ENCODE measurements at regions of chr20 and their contacts with region 1.

Region 1: GRCh38 chr20:48440763-48441315 is 387.0 kb downstream of the PREX1 start:
- DNase-seq: no peak
- H3K4me3 ChIP-seq: no peak overlapping the region
- H3K27ac ChIP-seq: no peak overlapping the region
- H3K4me1 ChIP-seq: no peaks in the 10 kb centered on the region
- H3K27me3 ChIP-seq: no peaks in the 10 kb centered on the region
- CTCF ChIP-seq: no peak

Region 2: DNA sequence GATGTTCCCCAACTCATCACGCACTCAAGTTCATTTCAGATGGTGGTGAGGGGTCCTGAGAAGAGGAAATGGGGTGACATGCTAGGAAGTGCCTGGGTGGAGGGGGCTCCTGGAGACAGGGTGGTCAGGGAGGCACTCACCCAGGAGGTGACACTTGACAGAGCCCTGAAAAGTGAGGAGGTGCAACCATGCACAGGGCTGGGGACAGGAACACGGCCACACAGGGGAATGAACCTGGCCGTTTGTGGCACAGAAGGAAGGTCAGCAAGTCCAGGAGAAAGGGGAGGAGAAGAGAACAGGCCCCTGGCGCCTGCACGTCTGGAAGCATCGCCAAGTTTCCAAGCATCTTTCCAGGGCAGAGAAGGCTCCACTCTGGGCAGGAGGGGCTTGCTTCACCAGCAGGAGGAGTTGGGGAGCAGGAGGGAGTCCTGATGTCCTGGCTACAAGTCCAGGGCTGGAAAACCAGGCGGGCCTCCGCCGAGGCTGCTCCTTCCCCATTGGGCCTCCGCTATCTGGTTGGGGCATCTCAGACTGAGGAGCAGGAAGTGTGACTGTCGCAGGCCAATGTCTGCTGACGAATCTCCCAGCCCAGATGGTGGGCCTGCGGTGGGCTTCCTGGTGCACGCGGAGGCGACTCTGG is 35.0 kb before region 1 on chr20:
- CTCF ChIA-PET with region 1: no interaction called
- POLR2A ChIA-PET with region 1: no interaction called
- intact Hi-C with region 1: no loop called
- DNase-seq: no peak
- H3K4me3 ChIP-seq: no peak overlapping the region
- H3K27ac ChIP-seq: no peak overlapping the region
- H3K4me1 ChIP-seq: no peaks in the 10 kb centered on the region
- H3K27me3 ChIP-seq: no peaks in the 10 kb centered on the region
- CTCF ChIP-seq: no peak

Region 3: DNA sequence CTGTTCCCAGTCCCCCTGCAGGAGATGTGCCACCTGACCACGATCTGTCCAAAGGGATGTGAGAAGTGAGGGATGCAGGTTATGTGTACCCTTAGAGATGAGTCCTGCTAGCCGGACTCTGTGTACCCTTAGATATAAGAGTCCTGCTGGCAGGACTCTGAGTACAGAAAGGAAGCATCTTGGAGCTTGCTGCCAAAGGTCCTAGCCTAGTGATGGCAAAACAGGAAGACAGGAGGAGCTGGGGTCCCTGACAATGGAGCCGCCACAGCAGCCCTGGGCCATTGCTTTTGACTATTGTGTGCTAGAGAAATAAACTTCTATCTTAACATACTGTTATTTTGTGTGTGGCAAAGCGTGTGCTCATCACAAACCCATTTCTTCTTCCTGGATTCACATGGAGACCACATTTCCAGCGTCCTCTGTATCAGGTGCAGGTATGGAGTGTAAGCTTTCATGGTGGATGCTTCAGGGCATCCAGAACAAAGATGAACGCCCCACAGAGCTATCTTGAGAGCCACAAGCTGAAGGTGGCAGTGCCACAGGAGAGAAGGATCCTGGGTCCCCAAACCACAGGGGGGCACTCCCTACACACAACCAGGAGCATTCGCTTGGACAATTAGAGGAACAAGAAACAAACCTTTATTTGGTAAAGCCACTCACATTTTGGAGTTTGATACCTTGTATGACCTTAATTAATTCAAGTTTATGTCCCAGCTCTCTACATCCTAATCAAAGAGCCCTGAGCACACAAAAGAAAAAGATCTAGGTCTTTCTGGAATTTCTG is 19.5 kb before region 1 on chr20:
- CTCF ChIA-PET with region 1: no interaction called
- POLR2A ChIA-PET with region 1: no interaction called
- intact Hi-C with region 1: loop called (anchors 1 kb)
- DNase-seq: peak in 1 of 2 experiments; percentile 38
- H3K4me3 ChIP-seq: no peak overlapping the region
- H3K27ac ChIP-seq: no peak overlapping the region
- H3K4me1 ChIP-seq: no peaks in the 10 kb centered on the region
- H3K27me3 ChIP-seq: no peaks in the 10 kb centered on the region
- CTCF ChIP-seq: peak; percentile 55

Region 4: DNA sequence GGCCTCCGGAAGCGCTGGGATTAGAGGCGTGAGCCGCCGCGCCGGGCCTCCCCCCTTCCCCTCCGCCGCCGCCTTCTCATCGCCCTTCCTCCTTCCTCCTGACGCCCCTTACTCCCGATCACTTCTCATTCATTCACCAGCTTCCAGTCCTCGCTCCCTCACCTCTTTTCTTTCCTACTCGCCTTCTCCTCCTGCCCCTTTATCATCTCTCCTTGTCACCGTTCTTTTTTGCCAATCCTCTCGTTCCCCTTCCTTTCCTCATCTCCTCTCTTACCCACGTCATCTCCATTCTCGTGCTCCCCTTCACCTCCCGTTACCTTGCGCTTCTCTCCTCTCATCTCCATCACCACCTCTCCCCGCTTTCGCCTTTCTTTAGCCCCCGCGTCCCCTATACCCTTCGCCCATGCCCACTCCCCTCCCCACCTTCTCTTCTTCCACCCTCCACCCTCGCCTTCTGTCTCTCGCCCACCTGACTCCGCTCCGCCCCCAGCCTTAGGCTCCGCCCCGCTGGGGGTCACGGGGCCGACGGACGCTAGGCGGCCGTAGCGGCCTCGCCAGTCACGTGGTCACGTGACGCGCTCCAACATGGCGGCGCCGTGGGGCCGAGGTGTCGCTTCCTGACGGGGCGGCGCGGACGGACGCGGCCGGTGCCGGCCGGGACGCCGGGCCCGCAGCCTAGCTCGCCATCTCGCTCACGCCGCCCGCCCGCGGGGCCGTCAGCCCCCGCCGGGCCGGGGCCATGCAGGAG is 480.5 kb after region 1 on chr20 and contains the start of gene ARFGEF2:
- CTCF ChIA-PET with region 1: no interaction called
- POLR2A ChIA-PET with region 1: no interaction called
- intact Hi-C with region 1: no loop called
- DNase-seq: peak; percentile 82 to 97
- H3K4me3 ChIP-seq: peak within 1 kb of the TSS; percentile 65
- H3K27ac ChIP-seq: peak within 1 kb of the TSS; percentile 90
- H3K4me1 ChIP-seq: peaks cover 36% of the 10 kb centered on the region
- H3K27me3 ChIP-seq: no peaks in the 10 kb centered on the region
- CTCF ChIP-seq: peak; percentile 7; the same call in 1 of the 2 replicates
- total RNA-seq, gene ARFGEF2: 39.9 and 47.0 TPM in 2 replicates